Breast epithelium (tissue), 4 donors: ENCODE measurements at regions of chr1 and their contacts with region 1.

Region 1: DNA sequence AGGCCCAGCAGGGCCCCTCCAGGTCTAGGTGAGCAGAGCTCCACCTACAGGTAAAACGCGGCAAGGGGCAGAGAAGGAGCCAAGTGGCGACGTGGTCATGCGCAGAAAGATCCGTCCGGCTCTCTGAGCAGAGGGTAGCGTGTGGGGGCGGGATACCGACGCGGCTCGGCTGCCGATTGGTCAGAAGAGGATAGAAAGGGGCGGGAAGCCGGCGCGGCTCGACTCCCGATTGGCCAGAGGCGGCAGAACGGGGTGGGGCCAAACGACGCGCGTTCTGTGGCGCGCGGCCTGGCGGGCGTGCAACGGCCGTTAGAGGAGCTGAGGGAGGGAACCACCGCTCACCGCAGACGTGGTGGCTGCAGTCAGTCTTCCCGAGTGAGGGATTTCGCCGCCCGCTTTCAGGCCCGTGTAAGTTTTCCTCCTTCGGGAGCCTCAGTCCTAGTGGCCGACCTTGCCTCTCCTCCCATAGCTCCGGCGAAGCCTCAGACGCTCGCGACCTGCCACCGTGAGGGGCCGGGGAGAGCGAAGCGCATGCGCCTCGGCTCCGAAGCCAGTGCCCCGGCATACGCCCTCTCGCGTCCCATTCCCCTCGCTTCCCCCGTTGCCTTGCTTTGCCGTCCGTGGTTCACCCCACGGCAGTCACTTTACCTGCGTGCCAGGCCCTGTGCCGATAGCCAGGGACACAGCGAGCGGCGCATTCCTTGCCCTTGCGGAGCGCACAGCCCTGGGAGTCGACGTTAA is at the start of gene CEP85:
- DNase-seq: peak; percentile 97 to 99
- H3K4me3 ChIP-seq: peak within 1 kb of the TSS; percentile 64 to 80 (median 78)
- H3K27ac ChIP-seq: peak within 1 kb of the TSS; percentile 82 to 87
- H3K4me1 ChIP-seq: no peaks in the 10 kb centered on the region
- H3K27me3 ChIP-seq: no peaks in the 10 kb centered on the region
- CTCF ChIP-seq: peak; percentile 58 to 88 (median 78)
- POLR2A ChIP-seq: no peak
- total RNA-seq, gene CEP85: 4.8 to 11.7 (median 7.5) TPM

Region 2: GRCh38 chr1:26169669-26170471 is 64.2 kb before region 1 on chr1 and contains the start of gene ZNF593:
- intact Hi-C with region 1: loop called (anchors 10 kb)
- DNase-seq: peak; percentile 88 to 93
- H3K4me3 ChIP-seq: peak within 1 kb of the TSS; percentile 76 to 89 (median 80)
- H3K27ac ChIP-seq: peak within 1 kb of the TSS; percentile 87 to 89
- H3K4me1 ChIP-seq: no peaks in the 10 kb centered on the region
- H3K27me3 ChIP-seq: no peaks in the 10 kb centered on the region
- CTCF ChIP-seq: peak; percentile 93 to 94 (median 94)
- POLR2A ChIP-seq: peak; percentile 52
- total RNA-seq, gene ZNF593: 26.4 to 39.7 (median 31.9) TPM